ENCODE measurements at regions of chr5 and their contacts with region 1.

Region 1: GRCh38 chr5:80654391-80655230 is at the starts of genes DHFR and MSH3:
- DNase-seq: peak; percentile 94 to 95
- H3K4me3 ChIP-seq: peak within 1 kb of the TSS; percentile 99
- H3K4me1 ChIP-seq: peaks cover 4% of the 10 kb centered on the region
- H3K27me3 ChIP-seq: no peaks in the 10 kb centered on the region

Region 2: DNA sequence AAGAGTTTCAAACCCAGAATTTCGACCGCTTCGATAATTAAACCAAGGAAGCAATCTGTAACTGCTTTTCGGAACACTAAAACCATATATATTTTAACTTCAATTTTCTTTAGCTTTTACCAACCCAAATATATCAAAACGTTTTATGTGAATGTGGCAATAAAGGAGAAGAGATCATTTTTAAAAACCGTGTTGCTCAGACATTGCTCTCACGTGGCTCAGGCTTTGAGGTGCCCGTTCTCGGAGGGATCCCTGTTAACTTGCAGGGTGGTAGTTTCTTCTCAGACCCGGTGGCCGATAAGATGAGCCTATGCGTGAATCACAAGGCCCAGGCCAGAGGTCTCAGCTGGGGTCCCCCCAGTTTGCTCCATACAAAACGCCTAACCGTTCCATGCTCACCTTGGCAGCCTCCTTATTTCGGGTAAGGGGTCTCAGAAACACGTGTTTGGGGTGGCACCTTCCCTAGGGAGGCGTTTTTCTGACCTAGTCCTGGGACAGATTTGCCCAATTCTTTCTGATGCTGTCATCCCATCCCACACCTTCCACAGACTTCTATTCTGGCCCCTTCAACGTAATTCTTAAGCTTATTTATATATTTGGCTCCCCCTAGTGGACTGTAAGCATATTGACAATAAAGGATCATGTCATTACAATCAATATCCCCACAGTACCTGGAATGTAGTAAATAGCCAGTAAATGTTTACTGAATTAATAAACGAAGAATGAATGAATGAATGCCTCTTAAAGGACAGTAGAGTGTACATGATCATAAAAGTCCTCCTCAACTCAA is 571.3 kb before region 1 on chr5:
- in situ Hi-C with region 1: loop called (anchors 25 kb)
- DNase-seq: peak; percentile 40 to 72
- H3K4me3 ChIP-seq: no peak overlapping the region
- H3K4me1 ChIP-seq: peaks cover 2% of the 10 kb centered on the region; the same call in 1 of the 2 replicates
- H3K27me3 ChIP-seq: no peaks in the 10 kb centered on the region

Region 3: DNA sequence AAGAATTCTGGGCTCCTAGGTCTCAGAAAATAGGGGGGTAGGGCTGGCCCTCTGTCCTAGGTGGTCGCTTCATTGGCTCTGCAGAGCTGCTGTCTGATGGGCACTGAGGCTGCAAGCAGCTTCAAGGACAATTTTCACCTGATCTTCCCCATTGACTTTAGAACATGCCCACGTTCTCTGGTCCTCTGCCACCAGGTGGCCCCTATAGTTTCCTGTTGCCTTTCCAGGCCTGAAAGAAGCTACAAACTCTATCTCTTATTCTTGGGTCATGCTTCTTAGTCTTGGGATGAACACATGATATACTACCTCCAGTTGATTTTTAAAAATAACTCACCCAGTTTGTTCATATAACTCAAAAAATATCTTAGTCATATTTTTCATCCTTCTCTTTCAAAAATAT is 308.6 kb before region 1 on chr5:
- in situ Hi-C with region 1: loop called (anchors 25 kb)
- DNase-seq: peak in 1 of 2 experiments; percentile 39
- H3K4me3 ChIP-seq: no peak overlapping the region
- H3K4me1 ChIP-seq: no peaks in the 10 kb centered on the region
- H3K27me3 ChIP-seq: no peaks in the 10 kb centered on the region

Region 4: DNA sequence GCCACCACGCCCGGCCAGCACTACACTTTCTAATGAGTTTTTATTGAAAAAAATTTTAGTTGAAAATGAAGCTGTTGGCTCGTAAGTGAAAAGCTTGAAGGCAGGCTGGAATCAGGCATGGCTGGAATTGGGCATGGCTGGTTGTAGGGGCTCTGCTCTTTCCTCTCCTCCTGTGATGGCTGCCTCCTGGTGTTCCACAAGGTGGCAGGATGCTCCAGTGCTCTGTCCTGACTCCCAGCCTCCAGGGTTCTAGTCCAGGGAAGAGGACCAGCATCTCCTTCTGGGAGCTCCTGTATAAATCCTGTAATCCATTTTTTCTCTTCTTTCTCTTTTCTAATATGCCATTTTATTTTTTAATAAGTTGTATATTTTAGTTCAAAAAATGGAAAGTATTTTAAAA is 57.3 kb after region 1 on chr5:
- in situ Hi-C with region 1: no loop called
- DNase-seq: peak; percentile 47 to 71
- H3K4me3 ChIP-seq: no peak overlapping the region
- H3K4me1 ChIP-seq: no peaks in the 10 kb centered on the region
- H3K27me3 ChIP-seq: no peaks in the 10 kb centered on the region

Measured in HAP-1 (cell line).